Naive thymus-derived CD4-positive, alpha-beta T cell (primary cell): ENCODE measurements at regions of chr11 and their contacts with region 1.

Region 1: GRCh38 chr11:66768088-66768521 is 39.1 kb upstream of the SPTBN2 start:
- DNase-seq: no peak
- ATAC-seq: no peak
- H3K4me3 ChIP-seq: no peak overlapping the region
- H3K4me3 Mint-ChIP-seq: no peak overlapping the region
- H3K27ac ChIP-seq: no peak overlapping the region
- H3K27ac Mint-ChIP-seq: no peak overlapping the region
- H3K4me1 ChIP-seq: no peaks in the 10 kb centered on the region
- H3K4me1 Mint-ChIP-seq: no peaks in the 10 kb centered on the region
- H3K27me3 ChIP-seq: no peaks in the 10 kb centered on the region
- H3K27me3 Mint-ChIP-seq: no peaks in the 10 kb centered on the region

Region 2: GRCh38 chr11:66172143-66172542 is 596.0 kb before region 1 on chr11:
- CTCF ChIA-PET with region 1: no interaction called
- POLR2A ChIA-PET with region 1: no interaction called
- intact Hi-C with region 1: no loop called
- DNase-seq: no peak
- ATAC-seq: no peak
- H3K4me3 ChIP-seq: no peak overlapping the region
- H3K4me3 Mint-ChIP-seq: peak overlapping the region in 1 of 10 donors; percentile 30
- H3K27ac ChIP-seq: no peak overlapping the region
- H3K27ac Mint-ChIP-seq: peak overlapping the region in 2 of 9 donors; percentile 5 to 38
- H3K4me1 ChIP-seq: no peaks in the 10 kb centered on the region
- H3K4me1 Mint-ChIP-seq: peaks cover 8 to 61% (median 47%) of the 10 kb centered on the region in 7 donors
- H3K27me3 ChIP-seq: no peaks in the 10 kb centered on the region
- H3K27me3 Mint-ChIP-seq: no peaks in the 10 kb centered on the region

Region 3: GRCh38 chr11:66510271-66510989 is 257.7 kb before region 1 on chr11 and contains the start of gene BBS1:
- CTCF ChIA-PET with region 1: no interaction called
- POLR2A ChIA-PET with region 1: no interaction called
- intact Hi-C with region 1: no loop called
- DNase-seq: peak; percentile 64 to 85 (median 78)
- ATAC-seq: peak; percentile 98
- H3K4me3 ChIP-seq: peak within 1 kb of the TSS; percentile 89
- H3K4me3 Mint-ChIP-seq: peak within 1 kb of the TSS; percentile 86 to 95 (median 90)
- H3K27ac ChIP-seq: peak within 1 kb of the TSS; percentile 65
- H3K27ac Mint-ChIP-seq: peak within 1 kb of the TSS; percentile 36 to 77 (median 67)
- H3K4me1 ChIP-seq: peaks cover 6 to 10% of the 10 kb centered on the region in 2 donors
- H3K4me1 Mint-ChIP-seq: peaks cover 9 to 24% (median 18%) of the 10 kb centered on the region in 7 donors
- H3K27me3 ChIP-seq: no peaks in the 10 kb centered on the region
- H3K27me3 Mint-ChIP-seq: no peaks in the 10 kb centered on the region
- total RNA-seq, gene BBS1: 16.9 to 38.2 (median 23.6) TPM

Region 4: GRCh38 chr11:66787912-66788758 is 20.0 kb after region 1 on chr11:
- CTCF ChIA-PET with region 1: no interaction called
- POLR2A ChIA-PET with region 1: no interaction called
- intact Hi-C with region 1: no loop called
- DNase-seq: no peak
- ATAC-seq: no peak
- H3K4me3 ChIP-seq: no peak overlapping the region
- H3K4me3 Mint-ChIP-seq: no peak overlapping the region
- H3K27ac ChIP-seq: no peak overlapping the region
- H3K27ac Mint-ChIP-seq: no peak overlapping the region
- H3K4me1 ChIP-seq: no peaks in the 10 kb centered on the region
- H3K4me1 Mint-ChIP-seq: no peaks in the 10 kb centered on the region
- H3K27me3 ChIP-seq: no peaks in the 10 kb centered on the region
- H3K27me3 Mint-ChIP-seq: no peaks in the 10 kb centered on the region

Region 5: GRCh38 chr11:66815646-66816045 is 47.5 kb after region 1 on chr11:
- CTCF ChIA-PET with region 1: no interaction called
- POLR2A ChIA-PET with region 1: no interaction called
- intact Hi-C with region 1: loop called in 1 of 2 experiments (anchors 5 kb)
- DNase-seq: no peak
- ATAC-seq: no peak
- H3K4me3 ChIP-seq: no peak overlapping the region
- H3K4me3 Mint-ChIP-seq: no peak overlapping the region
- H3K27ac ChIP-seq: no peak overlapping the region
- H3K27ac Mint-ChIP-seq: no peak overlapping the region
- H3K4me1 ChIP-seq: no peaks in the 10 kb centered on the region
- H3K4me1 Mint-ChIP-seq: peaks cover 0 to 2% (median 0%) of the 10 kb centered on the region in 7 donors
- H3K27me3 ChIP-seq: no peaks in the 10 kb centered on the region
- H3K27me3 Mint-ChIP-seq: no peaks in the 10 kb centered on the region